ENCODE measurements at regions of chr3 and their contacts with region 1.

Region 1: GRCh38 chr3:180912304-180913296 is at the start of gene FXR1:
- DNase-seq: peak; percentile 95
- ATAC-seq: peak; percentile 99
- total RNA-seq, gene FXR1: 285 TPM

Region 2: GRCh38 chr3:180989291-180990163 is 76.9 kb after region 1 on chr3 and contains the start of gene DNAJC19:
- intact Hi-C with region 1: loop called (anchors 10 kb)
- DNase-seq: peak; percentile 93
- ATAC-seq: peak; percentile 99
- total RNA-seq, gene DNAJC19: 122 TPM